Heart left ventricle (tissue), 16 donors: ENCODE measurements at regions of chr7 and their contacts with region 1.

Region 1: GRCh38 chr7:593324-594115 is 73.9 kb upstream of the PDGFA start:
- DNase-seq: peak; percentile 40 to 65 (median 51)
- ATAC-seq: peak in 3 of 4 donors; percentile 46 to 61 (median 51)
- H3K4me3 ChIP-seq: peak overlapping the region in 2 of 12 donors; percentile 10
- H3K27ac ChIP-seq: peak overlapping the region in 5 of 12 donors; percentile 30 to 64 (median 43)
- H3K4me1 ChIP-seq: peaks cover 0 to 32% (median 12%) of the 10 kb centered on the region in 12 donors
- H3K27me3 ChIP-seq: no peaks in the 10 kb centered on the region
- CTCF ChIP-seq: no peak
- POLR2A ChIP-seq: no peak

Region 2: DNA sequence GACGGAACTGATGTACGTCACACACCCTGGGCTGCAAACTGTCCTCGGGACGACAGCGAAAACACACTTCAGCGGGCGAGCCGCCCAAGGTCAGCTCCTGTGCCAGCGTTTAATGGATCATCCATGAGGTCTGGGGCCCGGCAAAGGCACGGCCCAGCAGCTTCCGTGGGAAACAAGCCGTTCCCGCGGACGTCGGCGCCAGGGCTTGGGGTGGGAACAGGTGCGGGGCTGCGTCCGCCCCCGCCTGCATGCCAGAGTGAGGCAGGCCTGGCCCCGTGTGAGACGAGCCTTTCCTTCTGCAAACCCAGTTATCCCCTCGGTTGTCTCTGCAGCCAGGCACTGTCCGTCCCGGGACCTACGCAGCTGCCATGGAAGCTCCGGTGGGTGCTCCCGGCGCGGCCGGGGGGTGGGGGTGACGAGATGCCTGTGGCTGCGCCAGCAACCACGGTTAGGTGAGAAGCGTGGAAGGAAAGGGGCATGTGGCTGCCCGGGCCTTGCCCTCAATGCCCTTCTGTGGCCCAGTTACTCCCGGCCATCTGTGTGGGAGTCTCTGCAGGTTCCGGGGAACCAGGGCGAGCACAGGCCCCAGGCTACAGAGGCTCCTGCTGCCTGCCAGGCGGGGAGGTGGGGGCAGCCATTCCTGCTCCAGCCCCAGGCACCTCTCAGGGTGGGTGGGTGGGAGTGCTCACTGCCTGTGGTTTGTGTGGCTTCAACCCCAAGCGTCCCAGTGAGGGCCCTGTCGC is 31.7 kb before region 1 on chr7:
- intact Hi-C with region 1: loop called in 1 of 10 experiments (anchors 5 kb)
- DNase-seq: peak in 1 of 5 donors; percentile 10
- ATAC-seq: peak in 2 of 4 donors; percentile 12 to 28
- H3K4me3 ChIP-seq: no peak overlapping the region
- H3K27ac ChIP-seq: no peak overlapping the region
- H3K4me1 ChIP-seq: peaks cover 0 to 28% (median 5%) of the 10 kb centered on the region in 12 donors
- H3K27me3 ChIP-seq: no peaks in the 10 kb centered on the region
- CTCF ChIP-seq: no peak
- POLR2A ChIP-seq: no peak

Region 3: DNA sequence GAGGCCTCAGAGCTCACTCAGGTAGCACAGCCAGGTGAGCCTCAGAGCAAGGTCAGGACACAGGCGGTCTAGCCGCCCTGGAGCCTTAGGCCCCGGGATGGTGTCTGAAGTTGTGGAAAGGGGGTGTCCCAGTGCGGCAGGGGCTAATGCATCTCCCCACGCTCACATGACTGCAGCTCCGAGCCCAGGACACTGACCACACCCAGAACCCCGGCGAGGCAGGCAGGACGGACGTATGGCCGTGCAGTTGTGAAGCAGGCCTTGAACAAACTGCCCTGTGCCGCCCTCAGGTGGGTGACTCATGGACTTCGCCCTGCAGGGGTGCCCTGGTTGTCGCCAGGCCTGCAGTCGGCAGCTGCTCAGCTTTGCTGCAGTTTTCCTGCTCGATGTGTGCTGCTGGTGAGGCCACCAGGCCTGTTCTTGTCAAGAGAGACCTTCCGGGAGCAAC is 138.6 kb after region 1 on chr7:
- intact Hi-C with region 1: loop called in 1 of 10 experiments (anchors 5 kb)
- DNase-seq: peak; percentile 48 to 81 (median 75)
- ATAC-seq: peak; percentile 77 to 87 (median 80)
- H3K4me3 ChIP-seq: no peak overlapping the region
- H3K27ac ChIP-seq: peak overlapping the region; percentile 29 to 93 (median 84)
- H3K4me1 ChIP-seq: peaks cover 3 to 41% (median 25%) of the 10 kb centered on the region in 12 donors
- H3K27me3 ChIP-seq: no peaks in the 10 kb centered on the region
- CTCF ChIP-seq: peak in 10 of 12 donors; percentile 22 to 62 (median 46)
- POLR2A ChIP-seq: no peak

Region 4: DNA sequence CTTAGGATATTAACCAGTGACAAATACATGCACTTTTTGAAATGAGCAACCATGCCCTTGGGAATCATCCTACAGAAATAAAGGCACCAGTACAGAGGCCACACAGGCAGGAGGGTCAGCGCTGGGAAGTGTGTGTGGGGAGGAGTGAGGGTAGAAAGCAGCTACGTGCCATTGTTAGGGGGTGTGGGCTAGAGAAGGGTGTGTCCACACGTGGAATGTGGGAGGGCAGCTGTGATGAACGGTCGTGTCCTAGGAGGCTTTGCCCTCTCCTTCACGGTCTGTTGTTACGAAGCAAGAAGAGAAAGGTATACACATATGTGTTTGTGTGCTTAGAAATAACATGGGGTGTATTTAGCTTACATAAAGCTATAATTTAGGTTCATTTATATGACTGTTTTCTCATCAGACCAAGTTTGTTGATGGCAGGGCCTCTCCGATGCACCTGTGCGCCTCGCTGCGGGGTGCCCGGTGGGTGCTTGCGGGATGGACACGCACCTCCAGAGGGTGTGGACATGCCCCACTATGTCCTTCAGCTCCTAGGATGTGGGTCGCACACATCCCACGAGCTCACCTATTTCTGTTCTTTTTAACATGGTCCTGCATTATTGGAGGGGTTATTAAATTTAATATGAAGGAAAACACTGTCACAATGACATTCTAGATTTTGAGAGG is 266.0 kb after region 1 on chr7:
- intact Hi-C with region 1: no loop called
- DNase-seq: no peak
- ATAC-seq: no peak
- H3K4me3 ChIP-seq: no peak overlapping the region
- H3K27ac ChIP-seq: no peak overlapping the region
- H3K4me1 ChIP-seq: no peaks in the 10 kb centered on the region
- H3K27me3 ChIP-seq: no peaks in the 10 kb centered on the region
- CTCF ChIP-seq: no peak
- POLR2A ChIP-seq: no peak

Region 5: DNA sequence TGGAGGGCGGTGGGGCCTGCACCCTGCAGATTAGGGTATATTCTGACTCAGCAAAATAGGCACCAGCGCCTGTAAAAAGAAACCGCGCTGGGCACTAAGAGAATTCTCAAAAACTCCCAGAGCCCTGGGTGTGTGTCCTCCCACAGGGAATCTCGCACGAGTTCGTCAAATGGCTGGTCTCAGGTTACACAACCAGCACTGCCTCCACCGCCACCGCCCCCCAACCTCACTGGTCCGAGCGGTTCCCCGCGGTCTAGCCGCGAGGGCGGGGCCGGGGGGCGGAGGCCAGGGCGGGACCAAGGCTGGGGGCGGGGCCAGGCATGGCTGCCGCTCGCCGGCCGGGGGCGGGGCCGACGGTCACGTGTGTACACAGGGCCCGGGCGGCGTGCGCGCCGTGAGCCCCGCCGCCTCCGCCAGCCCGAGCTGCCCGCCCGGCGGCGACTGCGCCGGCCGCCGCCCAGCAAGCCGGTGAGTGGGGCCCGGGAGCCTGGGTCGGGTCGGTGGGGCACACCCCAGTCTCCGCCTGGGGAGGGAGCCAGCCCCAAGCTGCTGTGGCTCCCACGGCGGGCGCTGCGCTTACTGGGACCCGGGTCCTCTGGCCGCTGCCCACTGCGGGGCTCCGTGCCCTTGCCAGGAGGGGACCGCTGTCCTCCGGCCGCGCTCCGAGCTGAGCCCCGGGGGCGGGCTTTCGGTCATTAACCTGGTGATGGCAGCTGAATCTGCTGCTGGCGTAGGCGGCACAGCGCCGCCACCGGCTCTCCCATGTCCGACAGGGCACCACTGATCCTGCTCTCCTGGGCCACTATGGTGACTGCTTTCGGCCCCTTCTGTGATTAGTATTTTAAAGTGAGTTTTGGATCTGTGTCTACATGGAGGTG is 450.9 kb after region 1 on chr7 and contains the start of gene GPR146:
- intact Hi-C with region 1: loop called in 1 of 10 experiments (anchors 5 kb)
- DNase-seq: peak; percentile 97 to 98 (median 98)
- ATAC-seq: peak; percentile 95 to 97 (median 96)
- H3K4me3 ChIP-seq: peak within 1 kb of the TSS; percentile 60 to 94 (median 78)
- H3K27ac ChIP-seq: peak within 1 kb of the TSS; percentile 85 to 97 (median 92)
- H3K4me1 ChIP-seq: peaks cover 5 to 77% (median 51%) of the 10 kb centered on the region in 12 donors
- H3K27me3 ChIP-seq: no peaks in the 10 kb centered on the region
- CTCF ChIP-seq: peak; percentile 30 to 72 (median 52)
- POLR2A ChIP-seq: peak in 1 of 2 donors; percentile 50
- total RNA-seq, gene GPR146: 12.3 to 56.8 (median 25.2) TPM